AG04449 (cell line): ENCODE measurements at regions of chr1 and their contacts with region 1.

Region 1: GRCh38 chr1:39564340-39564739 is 12.2 kb downstream of the PABPC4 start:
- DNase-seq: no peak
- H3K4me3 ChIP-seq: no peak overlapping the region
- CTCF ChIP-seq: no peak

Region 2: GRCh38 chr1:39575191-39576015 is 11.1 kb after region 1 on chr1:
- CTCF ChIA-PET with region 1: interaction called, 58 read pairs
- POLR2A ChIA-PET with region 1: interaction called, 4 read pairs
- DNase-seq: no peak
- H3K4me3 ChIP-seq: peak overlapping the region; percentile 78
- CTCF ChIP-seq: no peak